ENCODE measurements at regions of chr7 and their contacts with region 1.

Region 1: GRCh38 chr7:80622541-80622940 is 15.9 kb upstream of the CD36 start:
- DNase-seq: no peak
- H3K4me3 ChIP-seq: no peak overlapping the region
- H3K27ac ChIP-seq: no peak overlapping the region
- H3K4me1 ChIP-seq: peaks cover 13% of the 10 kb centered on the region
- H3K27me3 ChIP-seq: no peaks in the 10 kb centered on the region
- CTCF ChIP-seq: no peak

Region 2: GRCh38 chr7:80475383-80475782 is 147.2 kb before region 1 on chr7:
- CTCF ChIA-PET with region 1: interaction called, 14 read pairs
- POLR2A ChIA-PET with region 1: no interaction called
- intact Hi-C with region 1: no loop called
- DNase-seq: no peak
- H3K4me3 ChIP-seq: no peak overlapping the region
- H3K27ac ChIP-seq: no peak overlapping the region
- H3K4me1 ChIP-seq: 0 out of 2 replicates have a peak, but pooled peaks cover 1% of the 10 kb centered on the region
- H3K27me3 ChIP-seq: no peaks in the 10 kb centered on the region
- CTCF ChIP-seq: no peak

Region 3: GRCh38 chr7:80593869-80594582 is 28.5 kb before region 1 on chr7:
- CTCF ChIA-PET with region 1: no interaction called
- POLR2A ChIA-PET with region 1: interaction called, 25 read pairs
- intact Hi-C with region 1: no loop called
- DNase-seq: no peak
- H3K4me3 ChIP-seq: no peak overlapping the region
- H3K27ac ChIP-seq: no peak overlapping the region
- H3K4me1 ChIP-seq: no peaks in the 10 kb centered on the region
- H3K27me3 ChIP-seq: no peaks in the 10 kb centered on the region
- CTCF ChIP-seq: no peak

Region 4: GRCh38 chr7:80740778-80741545 is 118.4 kb after region 1 on chr7:
- CTCF ChIA-PET with region 1: no interaction called
- POLR2A ChIA-PET with region 1: no interaction called
- intact Hi-C with region 1: no loop called
- DNase-seq: peak in 1 of 2 experiments; percentile 52
- H3K4me3 ChIP-seq: no peak overlapping the region
- H3K27ac ChIP-seq: no peak overlapping the region
- H3K4me1 ChIP-seq: no peaks in the 10 kb centered on the region
- H3K27me3 ChIP-seq: no peaks in the 10 kb centered on the region
- CTCF ChIP-seq: no peak